AG04450 (cell line): ENCODE measurements at regions of chr7 and their contacts with region 1.

Region 1: DNA sequence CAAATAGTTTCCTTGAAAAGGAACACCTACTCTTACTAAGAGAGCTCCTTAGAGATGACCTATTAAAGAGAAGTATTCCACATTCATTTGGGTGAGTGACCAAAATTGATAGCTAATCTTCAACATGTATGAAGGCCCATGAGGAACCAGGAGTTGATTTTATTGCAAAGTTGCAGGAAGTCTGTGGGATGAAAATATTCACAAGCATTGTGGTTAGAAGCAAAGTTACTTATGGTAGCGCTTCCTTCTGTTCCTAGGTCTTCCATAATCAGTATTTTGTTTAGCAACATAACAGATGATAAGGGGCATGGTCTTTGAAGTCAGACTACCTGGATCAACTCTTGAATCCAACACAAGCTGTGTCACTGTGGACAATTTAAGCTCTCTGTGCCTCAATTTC is 164.5 kb downstream of the DGKB start:
- DNase-seq: no peak
- H3K4me3 ChIP-seq: no peak overlapping the region
- H3K27ac ChIP-seq: no peak overlapping the region
- H3K27me3 ChIP-seq: no peaks in the 10 kb centered on the region
- CTCF ChIP-seq: no peak

Region 2: GRCh38 chr7:15123901-15124300 is 385.8 kb after region 1 on chr7:
- CTCF ChIA-PET with region 1: no interaction called
- POLR2A ChIA-PET with region 1: interaction called, 11 read pairs
- DNase-seq: no peak
- H3K4me3 ChIP-seq: no peak overlapping the region
- H3K27ac ChIP-seq: no peak overlapping the region
- H3K27me3 ChIP-seq: no peaks in the 10 kb centered on the region
- CTCF ChIP-seq: no peak